ENCODE measurements at regions of chr7 and their contacts with region 1.

Region 1: DNA sequence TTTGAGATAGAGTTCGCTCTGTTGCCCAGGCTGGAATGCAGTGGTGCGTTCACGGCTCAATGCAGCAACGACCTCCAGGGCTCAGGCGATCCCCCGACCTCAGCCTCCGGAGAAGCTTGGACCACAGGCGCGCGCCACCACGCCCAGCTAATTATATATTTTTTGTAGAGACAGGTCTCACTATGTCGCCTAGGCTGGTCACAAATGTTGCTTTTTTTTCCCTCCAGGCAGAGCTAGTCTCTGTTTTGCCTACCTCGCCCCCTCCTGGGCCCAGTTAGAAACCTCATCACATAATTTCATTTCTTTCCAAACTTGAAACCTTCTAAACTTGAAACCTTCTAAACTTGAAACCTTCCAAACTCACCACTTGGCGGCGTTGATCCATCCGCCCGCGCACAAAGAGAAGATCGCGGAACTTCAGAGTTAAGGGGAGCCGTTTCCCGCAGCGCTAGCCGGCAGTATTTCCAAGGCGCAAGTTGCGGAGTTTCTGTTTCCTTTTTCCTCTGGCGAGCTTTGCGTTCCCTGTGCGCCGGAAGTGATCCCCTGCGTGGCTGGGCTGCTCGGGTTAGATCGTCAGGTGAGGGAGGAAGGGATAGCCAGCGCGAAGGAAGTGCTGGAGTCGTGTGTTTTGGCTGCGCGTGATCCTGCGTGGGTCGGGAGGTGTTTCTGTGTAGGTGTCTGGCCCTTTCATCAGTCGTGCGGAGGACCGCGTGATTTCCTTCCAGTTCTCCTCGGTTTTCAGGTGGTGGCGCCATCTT is at the start of gene SSBP1:
- DNase-seq: peak; percentile 95
- H3K4me3 ChIP-seq: peak within 1 kb of the TSS; percentile 41 to 84 (median 76)
- H3K27ac ChIP-seq: peak within 1 kb of the TSS; percentile 79 to 90 (median 88)
- H3K4me1 ChIP-seq: peaks cover 18 to 55% (median 43%) of the 10 kb centered on the region in 6 donors
- H3K27me3 ChIP-seq: no peaks in the 10 kb centered on the region
- CTCF ChIP-seq: peak; percentile 61 to 96 (median 82)
- POLR2A ChIP-seq: peak in 2 of 3 donors; percentile 29 to 72
- total RNA-seq, gene SSBP1: 69.3 to 122 (median 83.2) TPM

Region 2: GRCh38 chr7:141654551-141654950 is 83.5 kb before region 1 on chr7:
- intact Hi-C with region 1: loop called (anchors 10 kb)
- DNase-seq: no peak
- H3K4me3 ChIP-seq: no peak overlapping the region
- H3K27ac ChIP-seq: peak overlapping the region in 2 of 8 donors; percentile 1 to 26
- H3K4me1 ChIP-seq: peaks cover 0 to 21% (median 8%) of the 10 kb centered on the region in 6 donors
- H3K27me3 ChIP-seq: no peaks in the 10 kb centered on the region
- CTCF ChIP-seq: peak; percentile 42 to 75 (median 69)
- POLR2A ChIP-seq: no peak